Vagina (tissue), 2 donors: ENCODE measurements at regions of chr10 and their contacts with region 1.

Region 1: GRCh38 chr10:62610649-62611229 is 193.8 kb upstream of the ADO start:
- DNase-seq: no peak
- H3K4me3 ChIP-seq: no peak overlapping the region
- H3K27ac ChIP-seq: no peak overlapping the region
- H3K4me1 ChIP-seq: no peaks in the 10 kb centered on the region
- H3K27me3 ChIP-seq: no peaks in the 10 kb centered on the region
- CTCF ChIP-seq: peak in 1 of 3 experiments; percentile 25
- POLR2A ChIP-seq: no peak

Region 2: DNA sequence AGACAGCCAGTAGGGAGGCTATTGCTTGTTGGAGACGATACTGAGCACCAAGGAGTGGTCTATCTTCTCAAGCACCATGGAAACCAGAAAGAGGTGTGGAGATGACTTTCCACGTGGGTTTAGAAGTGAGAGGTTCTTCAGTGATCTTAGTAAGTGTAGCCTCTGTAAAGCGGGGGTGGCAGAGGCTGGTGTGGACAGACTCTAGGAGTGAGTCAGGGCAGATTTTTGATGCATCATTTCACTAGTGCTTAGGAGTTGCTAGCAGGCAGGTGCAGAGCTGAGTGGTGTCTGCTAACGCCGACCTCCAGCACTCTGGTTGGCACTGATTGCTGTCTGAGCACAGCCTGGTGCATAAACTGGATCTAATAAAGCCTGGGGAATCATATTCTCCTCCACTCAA is 115.4 kb after region 1 on chr10:
- intact Hi-C with region 1: no loop called
- DNase-seq: no peak
- H3K4me3 ChIP-seq: no peak overlapping the region
- H3K27ac ChIP-seq: no peak overlapping the region
- H3K4me1 ChIP-seq: no peaks in the 10 kb centered on the region
- H3K27me3 ChIP-seq: no peaks in the 10 kb centered on the region
- CTCF ChIP-seq: no peak
- POLR2A ChIP-seq: no peak

Region 3: DNA sequence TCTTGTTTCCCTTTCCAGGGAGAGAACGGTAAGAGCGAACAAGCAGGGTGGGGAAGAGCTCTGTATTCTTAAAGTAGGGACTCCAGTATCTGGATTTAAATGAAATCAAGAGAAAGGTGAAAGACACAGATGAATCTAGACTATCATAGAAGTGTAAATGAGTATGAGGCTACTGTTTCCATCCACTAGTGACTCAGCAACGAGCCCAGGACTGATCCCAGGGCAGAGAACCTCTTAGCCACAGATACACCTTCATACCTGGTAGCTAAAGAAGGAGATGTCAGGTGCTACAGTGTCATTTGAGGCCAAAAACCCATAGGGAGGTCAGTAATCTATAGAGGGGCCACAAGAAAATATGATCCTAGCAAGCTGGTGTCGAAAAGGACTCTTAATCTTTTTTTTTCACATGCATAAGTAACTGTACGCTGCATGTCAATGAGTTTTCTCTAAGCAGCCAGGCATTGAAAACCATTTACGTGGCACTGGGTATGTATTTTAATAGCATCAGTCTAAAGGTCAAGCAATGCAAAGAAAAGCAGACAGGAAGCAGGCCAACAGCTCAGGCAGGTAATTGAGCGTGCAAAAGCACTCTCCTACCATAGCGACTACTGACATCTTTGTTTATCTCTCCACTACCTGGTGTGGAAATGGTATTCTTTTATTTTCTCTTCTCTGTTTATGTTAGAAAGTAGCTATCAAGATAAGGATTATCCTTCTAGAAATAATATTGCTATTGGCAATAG is 296.9 kb after region 1 on chr10:
- intact Hi-C with region 1: loop called (anchors 10 kb)
- DNase-seq: no peak
- H3K4me3 ChIP-seq: no peak overlapping the region
- H3K27ac ChIP-seq: no peak overlapping the region
- H3K4me1 ChIP-seq: no peaks in the 10 kb centered on the region
- H3K27me3 ChIP-seq: no peaks in the 10 kb centered on the region
- CTCF ChIP-seq: no peak
- POLR2A ChIP-seq: no peak